ENCODE measurements at regions of chr2 and their contacts with region 1.

Region 1: GRCh38 chr2:39436592-39437510 is at the start of gene MAP4K3:
- DNase-seq: peak; percentile 97
- H3K4me3 ChIP-seq: peak within 1 kb of the TSS; percentile 76 to 95 (median 86)
- H3K27ac ChIP-seq: peak within 1 kb of the TSS; percentile 95 to 98 (median 98)
- H3K4me1 ChIP-seq: peaks cover 45 to 64% (median 63%) of the 10 kb centered on the region in 4 donors
- H3K27me3 ChIP-seq: no peaks in the 10 kb centered on the region
- CTCF ChIP-seq: peak in 1 of 3 experiments; percentile 7
- EP300 ChIP-seq: no peak
- POLR2A ChIP-seq: peak; percentile 86
- total RNA-seq, gene MAP4K3: 39.6 to 72.5 (median 53.8) TPM

Region 2: DNA sequence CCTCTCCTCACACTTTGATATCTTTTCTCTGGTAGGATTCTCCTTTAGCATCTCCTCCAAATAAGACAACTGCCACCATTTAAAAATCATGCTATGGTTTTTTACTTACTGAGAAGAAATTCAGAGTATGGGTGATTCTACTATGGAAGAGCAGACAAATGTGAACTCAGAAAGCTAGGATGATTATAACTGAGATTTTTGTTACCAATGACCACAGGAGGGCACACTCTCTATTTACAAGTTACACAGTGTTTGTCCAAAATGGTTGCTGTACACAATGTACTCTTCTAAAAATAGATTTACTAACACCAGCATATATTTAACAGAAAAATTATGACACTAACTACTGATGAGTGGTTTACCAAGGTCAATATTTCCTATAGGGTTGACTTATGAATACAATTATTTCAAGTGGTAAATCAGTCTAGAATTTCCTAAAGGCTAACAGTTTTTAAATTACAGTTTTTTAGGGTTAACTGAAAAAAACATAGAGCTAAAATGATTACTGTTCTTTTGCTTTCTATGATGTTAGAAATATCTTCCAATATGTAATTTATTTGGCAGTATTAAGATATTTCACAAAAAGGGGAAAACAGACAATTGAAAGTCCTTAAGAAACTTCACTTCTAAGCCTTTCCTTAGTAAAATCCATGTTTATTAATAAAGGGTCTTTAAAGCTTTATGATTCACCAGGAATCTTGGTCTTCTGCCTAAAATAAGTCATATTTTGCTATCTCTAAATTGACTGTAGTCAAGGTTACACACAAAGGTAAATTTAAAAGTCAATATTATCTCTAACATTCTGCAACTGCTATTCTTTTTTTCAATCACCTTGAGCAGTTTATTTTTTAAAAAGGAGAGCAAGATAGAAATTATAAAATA is 57.0 kb before region 1 on chr2:
- intact Hi-C with region 1: loop called (anchors 5 kb)
- DNase-seq: no peak
- H3K4me3 ChIP-seq: no peak overlapping the region
- H3K27ac ChIP-seq: peak overlapping the region; percentile 34 to 54 (median 40)
- H3K4me1 ChIP-seq: peaks cover 31 to 52% (median 50%) of the 10 kb centered on the region in 4 donors
- H3K27me3 ChIP-seq: no peaks in the 10 kb centered on the region
- CTCF ChIP-seq: peak; percentile 56 to 66 (median 62)
- EP300 ChIP-seq: no peak
- POLR2A ChIP-seq: no peak

Region 3: GRCh38 chr2:39494784-39495251 is 58.0 kb after region 1 on chr2:
- intact Hi-C with region 1: loop called (anchors 5 kb)
- DNase-seq: no peak
- H3K4me3 ChIP-seq: no peak overlapping the region
- H3K27ac ChIP-seq: peak overlapping the region in 2 of 4 donors; percentile 12 to 39
- H3K4me1 ChIP-seq: peaks cover 33 to 41% (median 35%) of the 10 kb centered on the region in 4 donors
- H3K27me3 ChIP-seq: no peaks in the 10 kb centered on the region
- CTCF ChIP-seq: no peak
- EP300 ChIP-seq: no peak
- POLR2A ChIP-seq: no peak

Region 4: GRCh38 chr2:39513641-39514094 is 76.8 kb after region 1 on chr2:
- intact Hi-C with region 1: loop called (anchors 5 kb)
- DNase-seq: no peak
- H3K4me3 ChIP-seq: no peak overlapping the region
- H3K27ac ChIP-seq: peak overlapping the region; percentile 70 to 74 (median 74)
- H3K4me1 ChIP-seq: peaks cover 62 to 91% (median 89%) of the 10 kb centered on the region in 4 donors
- H3K27me3 ChIP-seq: no peaks in the 10 kb centered on the region
- CTCF ChIP-seq: peak; percentile 42 to 61 (median 45)
- EP300 ChIP-seq: no peak
- POLR2A ChIP-seq: no peak

Region 5: DNA sequence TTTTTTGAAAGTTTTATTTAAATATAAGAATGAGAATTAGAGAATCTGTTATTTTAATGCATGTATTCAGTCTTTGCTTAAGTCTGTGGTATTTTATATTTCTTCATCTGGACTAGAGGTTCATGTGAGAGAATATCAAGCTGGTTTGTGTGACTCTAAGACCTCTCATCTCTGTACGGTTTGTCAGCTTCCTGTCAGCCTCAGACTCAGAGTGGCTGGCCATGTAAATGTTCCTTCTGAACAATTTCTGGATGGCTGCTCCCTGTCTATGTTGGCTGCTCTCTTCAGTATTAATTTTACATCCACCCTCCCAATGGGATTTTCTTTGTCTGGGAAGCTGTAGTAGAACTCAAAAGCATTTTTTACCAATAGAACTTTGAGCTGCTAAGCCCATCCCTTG is 567.5 kb after region 1 on chr2:
- intact Hi-C with region 1: no loop called
- DNase-seq: no peak
- H3K4me3 ChIP-seq: no peak overlapping the region
- H3K27ac ChIP-seq: no peak overlapping the region
- H3K4me1 ChIP-seq: no peaks in the 10 kb centered on the region
- H3K27me3 ChIP-seq: no peaks in the 10 kb centered on the region
- CTCF ChIP-seq: no peak
- EP300 ChIP-seq: no peak
- POLR2A ChIP-seq: no peak